Left cardiac atrium (tissue), 4 donors: ENCODE measurements at regions of chr1 and their contacts with region 1.

Region 1: GRCh38 chr1:78004719-78005447 is at the start of gene DNAJB4:
- DNase-seq: peak; percentile 63
- ATAC-seq: peak; percentile 99 to 100
- total RNA-seq, gene DNAJB4: 78.6 to 105 TPM

Region 2: DNA sequence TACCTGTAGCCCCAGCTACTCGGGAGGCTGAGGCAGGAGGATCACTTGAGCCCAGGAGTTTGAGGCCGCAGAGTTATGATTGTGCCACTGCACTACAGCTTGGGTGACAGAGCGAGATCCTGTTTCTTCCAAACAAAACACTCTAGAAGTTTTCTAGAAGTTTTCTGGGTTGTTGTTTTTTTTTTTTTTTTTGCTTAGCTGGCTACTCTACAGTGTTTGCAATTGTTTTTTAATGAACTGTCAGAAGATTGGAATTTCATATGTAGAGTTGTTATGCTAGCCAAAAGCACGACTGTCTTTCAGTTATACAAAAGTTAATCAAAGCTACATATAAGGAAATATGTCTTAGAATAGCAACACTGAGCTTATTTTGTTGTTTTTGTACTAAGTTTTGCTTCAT is 147.3 kb before region 1 on chr1:
- intact Hi-C with region 1: no loop called
- DNase-seq: no peak
- ATAC-seq: no peak

Region 3: GRCh38 chr1:78070758-78071157 is 65.9 kb after region 1 on chr1:
- intact Hi-C with region 1: no loop called
- DNase-seq: no peak
- ATAC-seq: peak; percentile 67 to 90

Region 4: GRCh38 chr1:78114034-78114956 is 109.4 kb after region 1 on chr1:
- intact Hi-C with region 1: loop called in 1 of 2 experiments (anchors 5 kb)
- DNase-seq: peak; percentile 33
- ATAC-seq: peak; percentile 79 to 82